ENCODE measurements at regions of chr11 and their contacts with region 1.

Region 1: GRCh38 chr11:2400069-2400760 is at the start of gene TSSC4:
- DNase-seq: peak; percentile 100
- ATAC-seq: peak; percentile 85
- H3K4me3 Mint-ChIP-seq: peak within 1 kb of the TSS; percentile 79
- H3K27ac Mint-ChIP-seq: peak within 1 kb of the TSS; percentile 87
- H3K4me1 Mint-ChIP-seq: peaks cover 16% of the 10 kb centered on the region
- H3K27me3 Mint-ChIP-seq: no peaks in the 10 kb centered on the region
- total RNA-seq, gene TSSC4: 48.4 to 52.1 TPM

Region 2: DNA sequence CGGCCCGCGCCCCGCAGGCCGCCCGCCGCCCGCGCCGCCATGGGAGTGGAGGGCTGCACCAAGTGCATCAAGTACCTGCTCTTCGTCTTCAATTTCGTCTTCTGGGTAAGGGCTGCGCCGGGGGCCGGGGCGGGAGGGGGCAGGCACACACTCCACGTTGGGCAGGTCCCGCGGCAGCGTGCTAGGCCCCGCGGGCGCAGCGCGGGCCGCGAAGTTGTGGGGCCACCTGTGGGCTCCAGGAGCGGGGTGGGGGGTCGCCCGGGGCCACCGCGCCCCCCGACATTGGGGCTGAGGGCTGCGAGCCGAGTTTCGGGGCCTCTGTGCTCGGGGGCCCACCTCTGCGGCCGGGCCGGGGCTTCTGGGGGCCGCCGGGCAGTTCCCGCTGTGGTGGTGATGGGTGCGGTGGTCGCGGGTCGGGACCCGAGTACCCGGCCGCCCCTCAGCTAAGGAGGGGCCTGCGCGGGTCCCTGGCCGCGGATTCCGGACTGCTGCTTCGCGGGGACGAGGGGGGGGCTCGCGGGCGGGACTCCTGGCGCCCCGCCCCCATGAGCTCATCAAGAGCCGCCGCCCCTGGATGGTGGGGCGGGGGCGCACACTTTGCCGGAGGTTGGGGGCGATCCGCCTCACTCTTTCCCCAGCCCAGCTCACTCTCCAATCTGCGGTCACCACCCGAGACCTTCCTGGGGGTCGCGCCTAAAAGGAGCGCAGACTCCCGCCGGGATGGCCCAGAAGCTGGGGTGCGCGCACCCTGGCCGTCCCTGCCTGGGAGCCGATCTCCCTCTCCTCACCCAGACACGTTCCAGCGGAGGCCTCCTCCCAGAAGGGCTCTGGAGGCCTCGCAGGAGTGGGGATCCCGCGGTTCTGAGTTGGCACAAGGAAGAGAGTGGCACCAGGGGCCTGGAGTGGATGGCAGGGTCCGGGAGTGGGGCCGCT is 22.4 kb before region 1 on chr11:
- CTCF ChIA-PET with region 1: interaction called, 10 read pairs
- DNase-seq: peak; percentile 68
- ATAC-seq: peak; percentile 46
- H3K4me3 Mint-ChIP-seq: peak overlapping the region; percentile 83
- H3K27ac Mint-ChIP-seq: peak overlapping the region; percentile 78
- H3K4me1 Mint-ChIP-seq: peaks cover 24% of the 10 kb centered on the region
- H3K27me3 Mint-ChIP-seq: peaks cover 4% of the 10 kb centered on the region

Region 3: DNA sequence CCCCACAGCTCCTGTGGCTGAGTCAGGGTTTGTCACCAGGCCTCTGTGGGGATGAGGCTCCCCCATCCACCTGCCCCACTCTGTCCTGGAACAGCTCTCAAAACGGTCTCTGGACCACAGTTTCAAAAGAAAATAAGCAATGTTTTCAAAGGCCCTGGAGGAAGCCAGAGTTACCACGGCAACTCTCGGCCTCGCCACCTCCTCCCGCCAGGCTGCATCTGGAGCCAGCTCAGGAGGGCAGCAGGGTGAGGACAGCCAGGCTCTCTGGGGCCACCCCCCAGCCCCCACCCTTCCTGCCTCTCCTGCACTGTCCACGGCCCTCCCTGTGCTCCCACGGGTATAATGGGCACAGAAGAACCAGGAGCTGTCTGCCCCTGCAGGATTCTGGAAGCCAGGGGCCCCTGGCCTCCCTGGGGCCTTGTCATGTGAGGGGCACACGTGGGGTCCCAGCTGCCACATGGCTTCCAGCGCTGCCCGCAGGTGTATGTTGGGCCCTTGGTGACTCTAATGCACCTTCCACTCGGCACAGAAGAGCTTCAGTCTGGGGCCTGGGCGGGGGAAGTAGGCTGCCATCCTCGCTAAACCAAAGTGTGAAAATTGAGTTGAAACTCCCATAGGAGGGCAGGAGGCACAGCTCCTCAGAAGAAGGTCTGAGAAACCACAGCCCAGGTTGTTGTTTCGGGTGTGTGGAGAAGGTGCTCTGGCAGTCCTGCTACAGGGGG is 12.8 kb before region 1 on chr11:
- CTCF ChIA-PET with region 1: interaction called, 37 read pairs
- DNase-seq: peak; percentile 65
- ATAC-seq: peak; percentile 40
- H3K4me3 Mint-ChIP-seq: peak overlapping the region; percentile 11
- H3K27ac Mint-ChIP-seq: peak overlapping the region; percentile 84
- H3K4me1 Mint-ChIP-seq: peaks cover 65% of the 10 kb centered on the region
- H3K27me3 Mint-ChIP-seq: no peaks in the 10 kb centered on the region

Measured in activated CD8-positive, alpha-beta memory T cell treated with anti-CD3 and anti-CD28 coated beads, Interleukin-2, amount 10 ng/mL, durations not matched to agents 7 days and 5 days (primary cell).